Endothelial cell of umbilical vein (primary cell): ENCODE measurements at regions of chr22 and their contacts with region 1.

Region 1: GRCh38 chr22:36028646-36029405 is at the start of gene RBFOX2:
- DNase-seq: peak; percentile 97
- H3K4me3 ChIP-seq: peak within 1 kb of the TSS; percentile 60 to 80 (median 74)
- H3K27ac ChIP-seq: peak within 1 kb of the TSS; percentile 53
- H3K4me1 ChIP-seq: peaks cover 21% of the 10 kb centered on the region
- H3K27me3 ChIP-seq: no peaks in the 10 kb centered on the region
- CTCF ChIP-seq: no peak
- POLR2A ChIP-seq: peak; percentile 11
- total RNA-seq, gene RBFOX2: 125 and 129 TPM in 2 replicates

Region 2: GRCh38 chr22:35777335-35777975 is 251.4 kb before region 1 on chr22:
- CTCF ChIA-PET with region 1: no interaction called
- POLR2A ChIA-PET with region 1: no interaction called
- dilution Hi-C with region 1: no loop called
- intact Hi-C with region 1: loop called (anchors 10 kb)
- DNase-seq: peak; percentile 64
- H3K4me3 ChIP-seq: peak overlapping the region in 2 of 3 experiments; percentile 19 to 23
- H3K27ac ChIP-seq: peak overlapping the region; percentile 72
- H3K4me1 ChIP-seq: peaks cover 19% of the 10 kb centered on the region
- H3K27me3 ChIP-seq: no peaks in the 10 kb centered on the region
- CTCF ChIP-seq: no peak
- POLR2A ChIP-seq: no peak

Region 3: GRCh38 chr22:35930933-35931332 is 97.9 kb before region 1 on chr22:
- CTCF ChIA-PET with region 1: interaction called, 30 read pairs
- POLR2A ChIA-PET with region 1: no interaction called
- dilution Hi-C with region 1: no loop called
- intact Hi-C with region 1: loop called (anchors 2 kb)
- DNase-seq: peak; percentile 77
- H3K4me3 ChIP-seq: no peak overlapping the region
- H3K27ac ChIP-seq: no peak overlapping the region
- H3K4me1 ChIP-seq: no peaks in the 10 kb centered on the region
- H3K27me3 ChIP-seq: no peaks in the 10 kb centered on the region
- CTCF ChIP-seq: peak; percentile 40 to 60
- POLR2A ChIP-seq: no peak

Region 4: GRCh38 chr22:36010882-36011281 is 17.9 kb before region 1 on chr22:
- CTCF ChIA-PET with region 1: interaction called, 10 read pairs
- POLR2A ChIA-PET with region 1: no interaction called
- dilution Hi-C with region 1: no loop called
- intact Hi-C with region 1: loop called (anchors 2 kb)
- DNase-seq: peak; percentile 49
- H3K4me3 ChIP-seq: no peak overlapping the region
- H3K27ac ChIP-seq: no peak overlapping the region
- H3K4me1 ChIP-seq: peaks cover 13% of the 10 kb centered on the region
- H3K27me3 ChIP-seq: no peaks in the 10 kb centered on the region
- CTCF ChIP-seq: no peak
- POLR2A ChIP-seq: no peak

Region 5: GRCh38 chr22:36123673-36124630 is 95.1 kb after region 1 on chr22:
- CTCF ChIA-PET with region 1: interaction called, 6 read pairs
- POLR2A ChIA-PET with region 1: no interaction called
- dilution Hi-C with region 1: no loop called
- intact Hi-C with region 1: loop called (anchors 5 kb)
- DNase-seq: peak; percentile 96
- H3K4me3 ChIP-seq: no peak overlapping the region
- H3K27ac ChIP-seq: peak overlapping the region; percentile 18
- H3K4me1 ChIP-seq: no peaks in the 10 kb centered on the region
- H3K27me3 ChIP-seq: no peaks in the 10 kb centered on the region
- CTCF ChIP-seq: peak; percentile 98 to 99
- POLR2A ChIP-seq: no peak

Region 6: DNA sequence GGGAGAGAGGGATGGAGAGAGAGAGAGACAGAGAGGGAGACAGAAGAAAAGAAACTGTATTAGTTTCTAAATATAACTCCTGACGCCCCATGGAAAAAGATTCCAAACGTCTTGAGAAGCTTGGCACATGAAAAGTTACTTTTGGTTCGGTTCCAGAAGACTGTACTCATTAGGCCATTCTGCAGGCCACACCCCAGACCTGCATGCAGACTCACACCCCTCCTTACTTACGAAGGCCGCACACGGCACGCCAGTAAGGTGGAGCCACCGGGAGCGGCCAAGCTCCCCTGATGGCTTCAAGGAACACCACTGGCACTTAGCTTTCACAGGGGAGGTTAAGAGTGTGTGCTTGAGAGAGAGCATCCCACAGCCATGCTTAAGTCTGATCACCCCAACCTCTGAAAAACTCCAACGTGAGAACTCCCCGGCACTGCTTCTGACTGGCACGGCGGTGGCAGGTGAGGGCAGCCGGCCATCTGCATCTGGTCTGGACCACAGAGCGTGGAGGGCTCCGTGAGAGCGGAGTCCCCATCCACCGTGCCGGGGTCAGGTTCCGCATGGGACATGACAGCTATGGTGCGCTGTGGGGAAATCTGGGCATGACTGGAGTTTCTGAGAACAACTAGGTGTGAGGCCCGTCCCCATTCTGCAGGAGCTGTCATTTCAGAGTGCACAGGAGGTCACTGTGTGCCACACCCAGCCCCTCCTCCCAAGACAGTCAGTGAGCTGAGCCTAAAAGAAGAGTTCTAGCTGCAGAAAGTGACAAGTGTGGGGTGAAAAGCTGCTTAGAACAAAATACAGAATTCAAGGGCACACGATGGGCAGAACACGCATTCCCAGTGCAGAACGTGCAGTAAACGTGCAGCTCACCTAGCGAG is 296.6 kb after region 1 on chr22:
- CTCF ChIA-PET with region 1: no interaction called
- POLR2A ChIA-PET with region 1: no interaction called
- dilution Hi-C with region 1: no loop called
- intact Hi-C with region 1: no loop called
- DNase-seq: peak; percentile 64
- H3K4me3 ChIP-seq: no peak overlapping the region
- H3K27ac ChIP-seq: peak overlapping the region; percentile 72
- H3K4me1 ChIP-seq: peaks cover 75% of the 10 kb centered on the region
- H3K27me3 ChIP-seq: no peaks in the 10 kb centered on the region
- CTCF ChIP-seq: no peak
- POLR2A ChIP-seq: no peak